ENCODE measurements at regions of chr2 and their contacts with region 1.

Region 1: DNA sequence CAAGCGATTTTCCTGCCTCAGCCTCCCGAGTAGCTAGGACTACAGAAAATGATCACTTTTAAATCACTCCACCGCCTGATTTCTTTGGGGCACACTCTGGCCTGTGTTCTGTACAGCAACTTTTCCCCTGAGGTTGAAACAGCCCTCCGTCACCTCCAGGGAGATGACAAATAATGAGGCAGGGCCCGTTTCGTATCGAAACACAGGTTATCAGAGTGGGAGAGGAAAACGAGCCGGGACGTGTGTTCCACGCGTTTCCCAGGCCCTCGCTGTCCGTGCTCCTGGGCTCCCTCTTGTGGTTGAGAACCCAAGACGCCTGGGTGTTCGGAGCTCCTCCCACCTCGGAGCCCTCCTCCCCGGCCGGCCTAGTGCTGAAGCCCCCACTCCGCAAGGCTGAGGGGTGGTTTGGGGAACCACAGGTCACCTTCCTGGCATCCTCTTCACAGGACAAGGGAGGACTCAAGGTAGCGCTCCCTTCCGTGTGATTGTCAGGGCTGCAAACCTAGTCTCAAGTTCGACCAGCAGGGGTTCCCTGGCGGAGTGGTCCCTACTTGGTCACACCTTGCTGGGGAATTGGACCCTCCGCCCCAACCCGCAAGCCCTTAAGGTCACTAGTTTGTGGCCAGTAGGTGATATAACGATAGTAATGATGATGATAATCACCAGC is 12.8 kb downstream of the ATP6V1B1 start:
- DNase-seq: peak; percentile 66
- ATAC-seq: peak; percentile 99
- H3K4me3 Mint-ChIP-seq: peak overlapping the region; percentile 77
- H3K27ac Mint-ChIP-seq: peak overlapping the region; percentile 4
- H3K4me1 Mint-ChIP-seq: peaks cover 12% of the 10 kb centered on the region
- H3K27me3 Mint-ChIP-seq: peaks cover 20% of the 10 kb centered on the region
- CTCF ChIP-seq: peak; percentile 73

Region 2: GRCh38 chr2:70656421-70657010 is 292.0 kb before region 1 on chr2:
- CTCF ChIA-PET with region 1: no interaction called
- POLR2A ChIA-PET with region 1: no interaction called
- intact Hi-C with region 1: loop called (anchors 2 kb)
- DNase-seq: no peak
- ATAC-seq: no peak
- H3K4me3 Mint-ChIP-seq: no peak overlapping the region
- H3K27ac Mint-ChIP-seq: no peak overlapping the region
- H3K4me1 Mint-ChIP-seq: no peaks in the 10 kb centered on the region
- H3K27me3 Mint-ChIP-seq: peaks cover 23% of the 10 kb centered on the region
- CTCF ChIP-seq: no peak

Region 3: DNA sequence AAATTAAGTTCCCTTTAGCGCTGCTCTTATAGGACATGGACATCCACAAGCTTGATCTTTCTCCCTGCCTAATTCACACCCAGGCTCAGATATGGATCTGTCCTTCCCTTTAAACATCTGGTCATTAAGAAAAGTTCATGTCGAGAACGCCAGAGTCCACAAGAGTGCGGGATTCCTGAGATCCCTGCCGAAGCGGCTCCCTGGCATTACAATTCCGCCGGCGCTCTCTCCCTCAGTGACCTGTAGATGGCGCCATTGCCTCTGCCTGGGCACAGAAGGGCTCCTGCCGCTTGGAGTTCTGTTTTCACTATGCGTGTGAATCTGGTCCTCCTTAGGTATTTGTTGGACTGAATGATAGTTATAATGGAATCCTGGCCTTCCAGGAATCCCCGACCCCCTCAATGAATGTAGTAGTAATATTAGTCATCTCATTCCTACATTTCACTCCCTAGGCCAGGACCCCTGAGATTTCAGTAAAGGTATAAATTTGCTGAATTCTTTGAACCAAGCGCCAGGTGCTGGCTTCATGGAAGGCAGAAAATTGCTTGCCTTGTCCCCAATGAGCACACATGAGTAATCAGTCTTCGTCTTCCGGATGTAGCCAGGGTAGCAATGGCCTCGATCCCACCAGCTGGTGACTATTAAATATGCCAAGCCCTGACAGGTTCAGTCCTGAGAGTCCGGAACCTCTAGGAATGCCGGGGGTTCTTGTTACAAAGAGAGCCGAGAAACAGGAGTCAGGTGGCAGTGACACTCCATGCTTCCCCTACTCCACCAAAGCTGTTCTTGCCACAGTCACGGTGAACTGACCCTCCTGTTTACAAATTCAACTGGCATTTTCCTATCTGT is 86.5 kb before region 1 on chr2:
- CTCF ChIA-PET with region 1: interaction called, 5 read pairs
- POLR2A ChIA-PET with region 1: no interaction called
- intact Hi-C with region 1: loop called (anchors 2 kb)
- DNase-seq: peak; percentile 39
- ATAC-seq: no peak
- H3K4me3 Mint-ChIP-seq: no peak overlapping the region
- H3K27ac Mint-ChIP-seq: no peak overlapping the region
- H3K4me1 Mint-ChIP-seq: peaks cover 3% of the 10 kb centered on the region
- H3K27me3 Mint-ChIP-seq: peaks cover 54% of the 10 kb centered on the region
- CTCF ChIP-seq: peak; percentile 50